Right ventricle myocardium inferior (tissue), 1 donor: ENCODE measurements at regions of chr10 and their contacts with region 1.

Region 1: GRCh38 chr10:31318854-31319601 is at the start of gene ZEB1:
- DNase-seq: peak; percentile 90
- ATAC-seq: peak; percentile 82
- total RNA-seq, gene ZEB1: 75.5 TPM

Region 2: DNA sequence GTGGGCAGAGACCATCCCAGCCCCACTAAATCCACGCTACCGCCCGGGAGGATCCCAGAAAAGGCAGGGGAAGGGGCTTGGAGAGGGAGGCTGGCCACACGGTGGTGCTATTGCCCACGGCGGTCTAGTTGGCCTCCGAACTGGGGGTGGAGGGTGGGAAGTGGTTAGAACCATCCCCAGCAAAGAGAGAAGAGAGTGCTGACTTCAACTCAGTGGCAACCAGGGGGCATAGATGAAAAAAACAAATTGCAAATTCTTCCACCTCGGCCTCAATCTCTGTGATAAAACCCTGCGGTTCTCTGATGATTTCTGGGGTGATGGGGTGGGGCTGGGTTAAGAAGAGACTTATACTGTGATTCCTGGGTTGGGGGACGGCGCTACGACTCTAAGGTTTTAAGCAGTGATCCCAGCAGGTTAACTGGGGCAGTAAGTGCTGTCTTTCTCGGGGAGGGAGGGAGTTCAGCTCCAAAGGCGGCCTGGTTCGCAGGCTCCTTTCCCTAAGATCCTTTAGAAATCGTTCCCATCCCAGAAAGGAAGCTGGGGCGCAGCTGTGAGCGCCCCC is 535.0 kb before region 1 on chr10:
- intact Hi-C with region 1: loop called (anchors 2 kb)
- DNase-seq: peak; percentile 90
- ATAC-seq: peak; percentile 83

Region 3: DNA sequence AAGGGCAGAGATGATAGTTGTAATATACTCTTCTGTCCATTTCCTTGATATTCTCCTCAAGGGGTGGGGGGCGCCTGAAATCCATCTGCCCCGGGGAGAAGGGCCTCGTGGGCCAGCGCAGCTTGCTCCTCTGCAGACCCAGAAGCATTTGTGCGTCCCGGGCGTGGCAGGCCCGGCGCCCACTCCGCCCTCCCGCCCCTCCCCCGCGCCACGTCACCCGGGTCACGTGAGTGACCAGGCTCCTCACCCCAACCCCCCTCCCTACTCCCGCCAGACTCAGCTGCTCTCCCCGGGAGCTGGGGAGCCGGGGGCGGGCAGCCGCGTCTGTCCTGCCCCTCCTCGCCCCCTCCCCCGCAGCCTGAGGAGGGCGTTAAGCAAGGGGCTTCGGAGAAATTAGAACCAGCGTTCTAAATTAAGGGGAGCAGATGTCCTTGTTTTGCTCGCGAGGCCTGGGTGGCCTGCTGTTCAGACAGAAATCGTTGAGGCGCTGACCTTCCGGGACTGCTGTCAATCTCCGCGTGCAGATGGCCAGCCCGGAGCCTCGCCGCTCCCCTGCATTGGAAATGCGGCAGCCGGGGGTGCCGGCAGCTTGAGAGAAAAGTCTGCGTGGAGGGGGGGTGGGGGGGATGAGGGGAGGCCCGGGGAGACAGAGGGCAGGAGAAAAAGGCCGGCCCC is 185.3 kb before region 1 on chr10:
- intact Hi-C with region 1: loop called (anchors 5 kb)
- DNase-seq: peak; percentile 93
- ATAC-seq: peak; percentile 90

Region 4: GRCh38 chr10:31603235-31604087 is 284.4 kb after region 1 on chr10:
- intact Hi-C with region 1: loop called (anchors 5 kb)
- DNase-seq: peak; percentile 97
- ATAC-seq: peak; percentile 96

Region 5: GRCh38 chr10:31808258-31809218 is 489.5 kb after region 1 on chr10:
- intact Hi-C with region 1: loop called (anchors 10 kb)
- DNase-seq: no peak
- ATAC-seq: peak; percentile 76